CD4-positive, alpha-beta T cell (primary cell): ENCODE measurements at regions of chr5 and their contacts with region 1.

Region 1: DNA sequence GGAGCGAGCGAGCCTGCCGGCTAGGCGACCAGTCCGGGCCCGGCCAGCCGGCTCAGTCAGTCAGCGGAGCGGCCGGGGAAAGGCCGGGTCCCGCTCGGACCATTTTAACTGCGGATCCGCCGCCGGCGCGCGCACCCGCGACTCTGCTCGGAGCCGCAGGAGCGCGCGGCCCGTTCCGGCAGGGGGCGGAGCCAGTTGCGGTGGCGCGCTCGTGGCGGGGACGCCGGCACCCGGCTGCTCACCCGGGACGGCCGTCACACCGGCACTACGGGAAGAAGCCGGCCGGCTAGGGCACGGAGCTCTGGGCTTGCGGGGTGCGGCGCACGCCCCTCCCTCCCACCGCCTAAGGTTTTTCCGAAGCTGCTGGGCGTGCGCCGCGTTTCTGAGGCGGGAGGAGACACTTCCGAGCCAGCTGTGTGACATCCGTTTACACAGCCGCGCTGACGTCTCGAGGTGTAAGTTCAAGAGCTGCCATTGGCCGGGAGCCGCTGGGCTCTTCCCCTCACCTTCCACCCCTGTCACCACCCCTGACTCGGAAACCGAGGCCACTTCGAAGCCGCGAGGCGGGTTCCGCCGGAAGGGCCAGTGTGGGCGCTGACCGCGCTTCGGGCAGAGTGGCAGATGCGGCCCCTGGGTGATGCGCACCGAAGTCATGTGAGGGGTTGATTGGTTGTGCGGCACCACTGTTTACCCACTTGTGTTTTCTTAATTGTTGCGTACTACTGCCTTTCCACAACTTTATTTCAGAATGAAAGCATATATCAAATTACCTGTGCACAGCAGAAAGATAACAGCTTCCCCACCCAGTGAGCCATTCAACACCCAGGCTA is at the start of gene FBXL17:
- DNase-seq: peak; percentile 83 to 97 (median 87)
- ATAC-seq: peak; percentile 76
- H3K4me3 ChIP-seq: peak within 1 kb of the TSS; percentile 63
- H3K4me3 Mint-ChIP-seq: peak within 1 kb of the TSS; percentile 90
- H3K27ac ChIP-seq: peak within 1 kb of the TSS; percentile 88 to 98
- H3K27ac Mint-ChIP-seq: peak within 1 kb of the TSS; percentile 94
- H3K4me1 ChIP-seq: peaks cover 13% of the 10 kb centered on the region
- H3K4me1 Mint-ChIP-seq: peaks cover 47% of the 10 kb centered on the region
- H3K27me3 ChIP-seq: no peaks in the 10 kb centered on the region
- H3K27me3 Mint-ChIP-seq: no peaks in the 10 kb centered on the region
- CTCF ChIP-seq: no peak
- total RNA-seq, gene FBXL17: 17.9 to 21.1 TPM

Region 2: GRCh38 chr5:108093186-108093585 is 289.0 kb before region 1 on chr5:
- CTCF ChIA-PET with region 1: no interaction called
- POLR2A ChIA-PET with region 1: no interaction called
- intact Hi-C with region 1: no loop called
- DNase-seq: no peak
- ATAC-seq: no peak
- H3K4me3 ChIP-seq: no peak overlapping the region
- H3K4me3 Mint-ChIP-seq: no peak overlapping the region
- H3K27ac ChIP-seq: no peak overlapping the region
- H3K27ac Mint-ChIP-seq: no peak overlapping the region
- H3K4me1 ChIP-seq: no peaks in the 10 kb centered on the region
- H3K4me1 Mint-ChIP-seq: no peaks in the 10 kb centered on the region
- H3K27me3 ChIP-seq: no peaks in the 10 kb centered on the region
- H3K27me3 Mint-ChIP-seq: no peaks in the 10 kb centered on the region
- CTCF ChIP-seq: no peak

Region 3: DNA sequence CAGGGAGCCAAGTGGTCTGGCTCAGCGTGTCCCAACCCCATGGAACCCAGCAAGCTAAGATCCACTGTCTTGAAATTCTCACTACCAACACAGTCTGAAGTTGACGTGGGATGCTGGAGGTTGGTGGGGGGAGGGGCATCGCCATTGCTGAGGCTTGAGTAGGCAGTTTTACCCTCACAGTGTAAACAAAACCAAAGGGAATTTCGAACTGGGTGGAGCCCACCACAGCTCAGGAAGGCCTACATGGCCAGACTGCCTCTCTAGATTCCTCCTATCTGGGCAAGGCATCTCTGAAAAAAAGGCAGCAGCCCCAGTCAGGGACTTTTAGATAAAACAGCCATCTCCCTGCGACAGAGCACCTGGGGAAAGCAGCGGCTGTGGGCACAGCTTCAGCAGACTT is 16.8 kb after region 1 on chr5:
- CTCF ChIA-PET with region 1: no interaction called
- POLR2A ChIA-PET with region 1: interaction called, 12 read pairs
- intact Hi-C with region 1: no loop called
- DNase-seq: no peak
- ATAC-seq: no peak
- H3K4me3 ChIP-seq: no peak overlapping the region
- H3K4me3 Mint-ChIP-seq: no peak overlapping the region
- H3K27ac ChIP-seq: no peak overlapping the region
- H3K27ac Mint-ChIP-seq: no peak overlapping the region
- H3K4me1 ChIP-seq: no peaks in the 10 kb centered on the region
- H3K4me1 Mint-ChIP-seq: no peaks in the 10 kb centered on the region
- H3K27me3 ChIP-seq: peaks cover 0 to 3% of the 10 kb centered on the region in 2 experiments
- H3K27me3 Mint-ChIP-seq: peaks cover 37% of the 10 kb centered on the region
- CTCF ChIP-seq: no peak

Region 4: DNA sequence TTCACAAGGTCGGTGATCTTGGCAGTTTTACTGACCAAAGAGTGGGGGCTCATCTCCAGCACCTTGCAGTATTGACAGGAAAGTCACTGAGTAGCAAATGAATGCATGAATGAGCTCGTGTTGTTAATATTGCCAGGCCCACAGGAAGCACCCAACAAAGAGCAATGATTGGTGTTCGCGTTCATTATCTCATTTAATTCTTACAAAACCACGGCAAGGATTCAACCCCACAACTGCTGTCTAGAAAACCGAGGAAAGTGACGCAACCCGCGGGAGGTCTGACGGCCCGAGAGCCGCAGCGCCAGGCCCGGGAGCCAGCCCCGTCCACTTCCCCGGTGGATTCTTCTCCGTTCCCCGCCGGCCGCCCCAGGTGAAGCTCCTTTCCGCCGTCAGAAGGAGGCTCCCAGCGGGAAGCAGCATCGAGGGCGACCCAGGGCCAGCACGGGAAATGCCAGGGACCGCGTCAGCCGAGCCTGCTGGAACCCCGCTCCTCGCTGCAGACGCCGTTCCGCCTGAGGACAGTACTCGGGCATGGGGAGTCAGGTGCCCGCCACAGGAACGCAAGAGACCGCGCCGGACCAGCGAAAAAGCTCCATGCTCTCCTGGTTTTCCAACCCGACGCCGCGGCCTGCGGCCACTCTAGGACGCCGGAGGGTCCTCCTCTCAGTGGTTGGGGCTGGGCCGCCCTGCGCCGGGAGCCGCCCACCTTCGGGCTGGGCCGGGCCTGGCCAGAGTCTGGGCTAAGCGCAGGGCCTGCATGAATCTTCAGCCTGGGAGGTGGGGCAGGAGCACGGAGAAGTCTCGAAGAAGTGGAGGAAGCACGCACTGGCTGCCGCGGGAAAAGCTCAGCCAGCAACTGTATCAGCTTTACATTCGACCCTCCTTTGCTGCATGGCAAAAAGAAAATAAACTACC is 345.7 kb after region 1 on chr5:
- CTCF ChIA-PET with region 1: no interaction called
- POLR2A ChIA-PET with region 1: interaction called, 10 read pairs
- intact Hi-C with region 1: no loop called
- DNase-seq: peak; percentile 5 to 68 (median 26)
- ATAC-seq: peak; percentile 61
- H3K4me3 ChIP-seq: peak overlapping the region; percentile 89
- H3K4me3 Mint-ChIP-seq: peak overlapping the region; percentile 82
- H3K27ac ChIP-seq: peak overlapping the region; percentile 39 to 48
- H3K27ac Mint-ChIP-seq: peak overlapping the region; percentile 63
- H3K4me1 ChIP-seq: peaks cover 19% of the 10 kb centered on the region
- H3K4me1 Mint-ChIP-seq: peaks cover 22% of the 10 kb centered on the region
- H3K27me3 ChIP-seq: peaks cover 4 to 22% of the 10 kb centered on the region in 2 experiments
- H3K27me3 Mint-ChIP-seq: peaks cover 35% of the 10 kb centered on the region
- CTCF ChIP-seq: no peak

Region 5: GRCh38 chr5:108748401-108749127 is 366.4 kb after region 1 on chr5:
- CTCF ChIA-PET with region 1: no interaction called
- POLR2A ChIA-PET with region 1: interaction called, 6 read pairs
- intact Hi-C with region 1: loop called (anchors 2 to 5 kb)
- DNase-seq: peak; percentile 92 to 99 (median 96)
- ATAC-seq: peak; percentile 91
- H3K4me3 ChIP-seq: peak overlapping the region; percentile 98
- H3K4me3 Mint-ChIP-seq: peak overlapping the region; percentile 96
- H3K27ac ChIP-seq: peak overlapping the region; percentile 91 to 92
- H3K27ac Mint-ChIP-seq: peak overlapping the region; percentile 91
- H3K4me1 ChIP-seq: peaks cover 18% of the 10 kb centered on the region
- H3K4me1 Mint-ChIP-seq: peaks cover 21% of the 10 kb centered on the region
- H3K27me3 ChIP-seq: peaks cover 0 to 5% of the 10 kb centered on the region in 2 experiments
- H3K27me3 Mint-ChIP-seq: peaks cover 4% of the 10 kb centered on the region
- CTCF ChIP-seq: no peak